GM12878 (cell line): ENCODE measurements at regions of chr1 and their contacts with region 1.

Region 1: GRCh38 chr1:220184506-220184905 is 87.7 kb downstream of the RAB3GAP2 start:
- DNase-seq: no peak
- ATAC-seq: no peak
- H3K4me3 ChIP-seq: no peak overlapping the region
- H3K27ac ChIP-seq: no peak overlapping the region
- H3K4me1 ChIP-seq: no peaks in the 10 kb centered on the region
- H3K27me3 ChIP-seq: no peaks in the 10 kb centered on the region
- CTCF ChIP-seq: no peak
- EP300 ChIP-seq: no peak
- POLR2A ChIP-seq: no peak
- RAD21 ChIP-seq: no peak

Region 2: DNA sequence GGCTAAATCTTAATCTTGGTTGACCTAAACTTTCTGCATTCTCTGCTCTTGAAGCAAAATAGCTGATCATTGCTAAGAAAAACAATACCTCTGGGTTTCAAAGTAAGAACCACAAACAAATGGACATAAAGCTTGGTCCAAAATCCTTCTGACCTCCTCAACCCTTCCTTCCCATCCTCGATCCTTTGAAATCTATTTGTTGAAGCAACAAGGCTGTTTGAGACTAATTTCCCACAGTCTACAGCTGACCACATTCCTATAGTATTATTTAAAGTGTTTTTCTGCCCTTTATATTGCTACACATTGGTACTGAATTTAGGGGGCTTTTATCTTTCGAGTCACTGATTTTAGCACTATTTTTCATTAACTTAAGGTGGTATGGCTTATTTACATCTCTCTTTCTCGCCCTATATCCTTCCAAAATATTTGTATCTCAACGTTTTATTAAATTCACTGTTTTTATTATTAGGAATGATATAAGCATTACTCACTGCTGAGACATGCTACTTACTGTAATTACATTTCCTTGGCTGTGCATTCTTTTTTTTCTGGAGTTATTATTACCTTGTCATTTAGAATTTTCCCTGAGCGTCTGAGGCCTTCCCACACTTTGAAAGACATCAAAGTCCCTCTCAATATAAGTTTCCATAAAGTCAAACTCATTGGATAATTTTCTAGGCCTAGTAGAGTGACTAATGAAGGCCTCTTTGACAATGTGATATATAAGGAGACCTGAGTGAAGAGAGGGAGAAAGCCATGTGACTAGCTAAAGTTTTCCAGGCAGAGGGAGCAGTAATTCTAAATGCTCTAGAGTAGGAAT is 13.9 kb after region 1 on chr1:
- CTCF ChIA-PET with region 1: interaction called, 13 read pairs
- POLR2A ChIA-PET with region 1: no interaction called
- RAD21 ChIA-PET with region 1: interaction called, 6 read pairs
- SMC1A ChIA-PET with region 1: interaction called, 18 read pairs
- in situ Hi-C with region 1: no loop called
- intact Hi-C with region 1: no loop called
- DNase-seq: no peak
- ATAC-seq: no peak
- H3K4me3 ChIP-seq: no peak overlapping the region
- H3K27ac ChIP-seq: no peak overlapping the region
- H3K4me1 ChIP-seq: no peaks in the 10 kb centered on the region
- H3K27me3 ChIP-seq: no peaks in the 10 kb centered on the region
- CTCF ChIP-seq: no peak
- EP300 ChIP-seq: no peak
- POLR2A ChIP-seq: no peak
- RAD21 ChIP-seq: no peak